Mammary epithelial cell (primary cell): ENCODE measurements at regions of chr6 and their contacts with region 1.

Region 1: GRCh38 chr6:170516783-170517616 is 36.1 kb downstream of the PSMB1 start:
- DNase-seq: peak; percentile 68
- H3K4me3 ChIP-seq: no peak overlapping the region
- H3K27ac ChIP-seq: no peak overlapping the region
- H3K4me1 ChIP-seq: no peaks in the 10 kb centered on the region
- H3K27me3 ChIP-seq: no peaks in the 10 kb centered on the region
- CTCF ChIP-seq: peak; percentile 88 to 90

Region 2: GRCh38 chr6:169789982-169790927 is 726.7 kb before region 1 on chr6:
- CTCF ChIA-PET with region 1: no interaction called
- dilution Hi-C with region 1: no loop called
- in situ Hi-C with region 1: loop called (anchors 5 to 10 kb)
- intact Hi-C with region 1: loop called (anchors 1 kb)
- DNase-seq: peak; percentile 72
- H3K4me3 ChIP-seq: peak overlapping the region; percentile 56 to 57 (median 56)
- H3K27ac ChIP-seq: no peak overlapping the region
- H3K4me1 ChIP-seq: peaks cover 17% of the 10 kb centered on the region
- H3K27me3 ChIP-seq: no peaks in the 10 kb centered on the region
- CTCF ChIP-seq: peak; percentile 98 to 99

Region 3: GRCh38 chr6:169959136-169960002 is 557.6 kb before region 1 on chr6:
- CTCF ChIA-PET with region 1: no interaction called
- dilution Hi-C with region 1: no loop called
- in situ Hi-C with region 1: loop called in 1 of 2 experiments (anchors 10 kb)
- intact Hi-C with region 1: no loop called
- DNase-seq: no peak
- H3K4me3 ChIP-seq: no peak overlapping the region
- H3K27ac ChIP-seq: no peak overlapping the region
- H3K4me1 ChIP-seq: no peaks in the 10 kb centered on the region
- H3K27me3 ChIP-seq: no peaks in the 10 kb centered on the region
- CTCF ChIP-seq: peak in 1 of 2 donors; percentile 4

Region 4: DNA sequence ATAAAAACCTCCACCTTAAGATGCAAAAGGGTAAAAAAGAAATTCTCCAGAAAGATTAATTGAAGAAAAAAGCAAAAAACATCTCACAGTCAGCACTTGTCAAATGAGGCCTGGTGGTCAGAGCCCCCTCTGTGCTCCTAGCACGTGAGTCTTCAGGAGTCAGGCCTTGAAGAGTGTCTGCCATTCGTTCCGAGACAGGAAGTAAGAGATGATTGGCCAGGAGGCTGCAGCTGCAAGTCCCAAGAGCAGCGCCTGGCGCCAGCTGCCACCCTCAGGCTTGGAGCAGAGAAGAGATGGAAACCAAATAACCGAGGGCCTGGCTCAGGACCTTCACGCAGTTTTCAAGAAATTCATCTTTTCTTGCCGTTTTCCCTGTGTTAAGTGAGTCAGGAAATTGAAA is 145.4 kb before region 1 on chr6:
- CTCF ChIA-PET with region 1: no interaction called
- dilution Hi-C with region 1: no loop called
- in situ Hi-C with region 1: no loop called
- intact Hi-C with region 1: loop called (anchors 10 kb)
- DNase-seq: no peak
- H3K4me3 ChIP-seq: no peak overlapping the region
- H3K27ac ChIP-seq: no peak overlapping the region
- H3K4me1 ChIP-seq: peaks cover 12% of the 10 kb centered on the region
- H3K27me3 ChIP-seq: no peaks in the 10 kb centered on the region
- CTCF ChIP-seq: no peak